ENCODE measurements at regions of chr6 and their contacts with region 1.

Region 1: GRCh38 chr6:133184798-133185372 is 56.3 kb upstream of the EYA4 start:
- DNase-seq: no peak
- H3K4me3 ChIP-seq: no peak overlapping the region
- H3K27ac ChIP-seq: no peak overlapping the region
- H3K4me1 ChIP-seq: no peaks in the 10 kb centered on the region
- H3K27me3 ChIP-seq: no peaks in the 10 kb centered on the region
- CTCF ChIP-seq: peak; percentile 92

Region 2: DNA sequence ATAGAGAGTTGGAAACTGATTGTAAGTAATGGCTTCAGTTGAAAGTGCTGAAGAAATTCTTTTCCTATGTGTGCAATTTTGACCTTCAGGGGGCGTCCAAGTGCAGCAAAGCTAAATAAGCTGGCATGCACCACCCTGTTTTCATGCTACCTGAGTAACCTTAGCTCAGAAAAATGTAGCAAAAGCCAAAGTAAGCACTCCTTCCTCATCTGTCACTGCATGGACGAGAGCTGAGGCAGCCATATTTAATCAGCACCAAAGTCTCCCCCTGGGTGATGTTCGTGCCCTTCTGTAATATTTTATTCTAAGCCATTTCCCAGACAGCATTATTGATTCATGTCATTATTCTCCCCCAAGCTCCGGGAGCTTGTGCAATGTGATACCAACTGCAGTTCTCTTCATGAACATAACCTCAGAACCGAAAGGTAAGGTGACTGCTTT is 247.4 kb before region 1 on chr6:
- CTCF ChIA-PET with region 1: no interaction called
- POLR2A ChIA-PET with region 1: no interaction called
- intact Hi-C with region 1: loop called (anchors 2 kb)
- DNase-seq: peak in 1 of 2 experiments; percentile 56
- H3K4me3 ChIP-seq: no peak overlapping the region
- H3K27ac ChIP-seq: no peak overlapping the region
- H3K4me1 ChIP-seq: no peaks in the 10 kb centered on the region
- H3K27me3 ChIP-seq: no peaks in the 10 kb centered on the region
- CTCF ChIP-seq: peak; percentile 74

Region 3: DNA sequence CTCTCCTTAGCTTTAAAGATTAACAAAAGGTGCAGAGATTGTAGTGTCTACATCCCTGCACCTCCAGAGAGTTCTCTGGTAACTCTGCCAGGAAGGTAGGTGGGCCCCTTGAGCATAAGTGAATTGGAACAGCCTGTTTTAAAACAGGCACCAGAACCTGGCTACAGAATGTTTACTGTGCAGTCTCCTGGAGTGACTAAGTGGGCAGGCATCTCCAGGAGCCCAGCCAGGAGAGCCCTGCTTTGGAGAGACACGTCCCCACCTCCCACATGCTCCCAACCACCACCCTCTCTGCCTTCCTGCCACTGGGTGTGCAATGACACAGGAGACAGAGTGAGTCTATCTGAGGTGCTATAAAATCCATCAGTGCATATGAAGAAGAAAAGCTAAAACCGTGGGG is 54.0 kb before region 1 on chr6:
- CTCF ChIA-PET with region 1: interaction called, 10 read pairs
- POLR2A ChIA-PET with region 1: no interaction called
- intact Hi-C with region 1: no loop called
- DNase-seq: peak; percentile 87 to 88
- H3K4me3 ChIP-seq: no peak overlapping the region
- H3K27ac ChIP-seq: no peak overlapping the region
- H3K4me1 ChIP-seq: peaks cover 15% of the 10 kb centered on the region
- H3K27me3 ChIP-seq: no peaks in the 10 kb centered on the region
- CTCF ChIP-seq: no peak; the same call in 1 of the 2 replicates

Region 4: DNA sequence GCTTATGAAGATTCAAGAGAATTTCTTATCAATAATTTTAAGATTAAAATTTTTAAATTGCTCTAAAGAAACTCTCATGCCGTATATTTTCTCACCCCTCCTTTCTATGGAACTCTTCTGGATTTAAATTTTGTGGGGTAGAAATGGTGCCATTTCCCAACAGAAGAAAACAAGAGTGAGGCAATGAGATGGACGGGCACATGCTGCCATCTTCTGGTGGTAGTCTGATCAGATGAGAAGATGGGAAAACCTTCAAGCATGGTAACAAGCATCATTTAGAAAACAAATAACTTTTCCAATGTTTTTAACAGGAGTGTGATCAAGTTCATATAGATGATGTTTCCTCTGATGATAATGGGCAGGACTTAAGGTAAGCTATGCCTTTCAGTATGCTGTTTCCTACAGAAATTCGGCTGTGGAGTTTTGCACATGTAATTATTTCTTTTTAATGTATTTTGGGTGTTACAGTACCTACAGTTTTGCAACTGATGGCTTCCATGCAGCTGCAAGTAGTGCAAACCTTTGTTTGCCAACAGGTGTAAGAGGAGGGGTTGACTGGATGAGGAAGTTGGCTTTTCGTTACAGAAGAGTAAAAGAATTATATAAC is 327.6 kb after region 1 on chr6:
- CTCF ChIA-PET with region 1: no interaction called
- POLR2A ChIA-PET with region 1: interaction called, 4 read pairs
- intact Hi-C with region 1: loop called (anchors 2 kb)
- DNase-seq: peak in 1 of 2 experiments; percentile 45
- H3K4me3 ChIP-seq: no peak overlapping the region
- H3K27ac ChIP-seq: no peak overlapping the region
- H3K4me1 ChIP-seq: no peaks in the 10 kb centered on the region
- H3K27me3 ChIP-seq: no peaks in the 10 kb centered on the region
- CTCF ChIP-seq: peak; percentile 93

Region 5: GRCh38 chr6:133553652-133554051 is 368.8 kb after region 1 on chr6:
- CTCF ChIA-PET with region 1: interaction called, 3 read pairs
- POLR2A ChIA-PET with region 1: no interaction called
- intact Hi-C with region 1: loop called (anchors 2 kb)
- DNase-seq: peak in 1 of 2 experiments; percentile 38
- H3K4me3 ChIP-seq: no peak overlapping the region
- H3K27ac ChIP-seq: no peak overlapping the region
- H3K4me1 ChIP-seq: no peaks in the 10 kb centered on the region
- H3K27me3 ChIP-seq: no peaks in the 10 kb centered on the region
- CTCF ChIP-seq: peak; percentile 89

Region 6: GRCh38 chr6:133916650-133917151 is 731.8 kb after region 1 on chr6:
- CTCF ChIA-PET with region 1: interaction called, 7 read pairs
- POLR2A ChIA-PET with region 1: no interaction called
- intact Hi-C with region 1: loop called (anchors 5 kb)
- DNase-seq: peak; percentile 71 to 82
- H3K4me3 ChIP-seq: peak overlapping the region; percentile 6; the same call in 1 of the 2 replicates
- H3K27ac ChIP-seq: no peak overlapping the region
- H3K4me1 ChIP-seq: no peaks in the 10 kb centered on the region
- H3K27me3 ChIP-seq: no peaks in the 10 kb centered on the region
- CTCF ChIP-seq: peak; percentile 100

Region 7: GRCh38 chr6:134196568-134197193 is 1011.8 kb after region 1 on chr6:
- CTCF ChIA-PET with region 1: no interaction called
- POLR2A ChIA-PET with region 1: no interaction called
- intact Hi-C with region 1: no loop called
- DNase-seq: no peak
- H3K4me3 ChIP-seq: no peak overlapping the region
- H3K27ac ChIP-seq: no peak overlapping the region
- H3K4me1 ChIP-seq: peaks cover 17% of the 10 kb centered on the region
- H3K27me3 ChIP-seq: no peaks in the 10 kb centered on the region
- CTCF ChIP-seq: no peak

Measured in PC-9 (cell line).